ENCODE measurements at regions of chr6 and their contacts with region 1.

Region 1: GRCh38 chr6:2103644-2104523 is 141.5 kb downstream of the GMDS start:
- DNase-seq: peak; percentile 38
- H3K4me3 ChIP-seq: no peak overlapping the region
- H3K27ac ChIP-seq: no peak overlapping the region
- H3K4me1 ChIP-seq: no peaks in the 10 kb centered on the region
- CTCF ChIP-seq: peak; percentile 81

Region 2: GRCh38 chr6:1604158-1605030 is 499.5 kb before region 1 on chr6:
- CTCF ChIA-PET with region 1: no interaction called
- POLR2A ChIA-PET with region 1: no interaction called
- intact Hi-C with region 1: loop called (anchors 2 kb)
- DNase-seq: peak; percentile 57
- H3K4me3 ChIP-seq: no peak overlapping the region
- H3K27ac ChIP-seq: no peak overlapping the region
- H3K4me1 ChIP-seq: no peaks in the 10 kb centered on the region
- CTCF ChIP-seq: peak; percentile 81

Region 3: DNA sequence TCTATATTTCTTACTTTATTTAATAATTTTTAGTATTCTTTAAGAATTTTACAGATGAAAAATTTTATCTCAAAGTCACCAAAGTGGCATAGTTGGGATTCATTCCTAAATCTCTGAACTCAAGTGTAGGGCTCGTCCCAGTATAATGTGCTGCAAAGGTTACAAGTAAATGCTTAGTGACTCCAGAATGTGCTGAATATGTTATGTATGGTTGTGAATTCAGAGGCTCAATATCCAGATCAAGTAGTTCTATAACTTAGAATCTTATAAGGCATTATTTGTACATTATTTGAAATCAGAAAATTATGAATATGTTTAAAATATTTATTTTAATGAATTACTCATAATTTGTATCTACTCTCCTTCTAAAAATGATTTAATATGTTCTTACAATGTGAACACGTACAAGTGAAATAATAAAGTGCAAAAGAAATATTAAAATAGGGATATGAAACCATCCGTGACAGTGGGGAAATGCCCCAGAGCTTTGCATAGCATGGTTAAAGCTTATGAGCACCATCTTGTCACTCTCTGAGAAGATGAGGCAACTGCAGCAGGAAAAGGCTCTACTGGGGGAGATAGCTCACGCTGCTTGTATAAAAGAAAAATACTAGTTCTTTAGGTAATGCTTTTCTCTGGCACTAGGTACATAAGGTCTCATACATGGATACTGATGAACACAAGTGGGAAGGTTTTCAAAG is 235.2 kb before region 1 on chr6:
- CTCF ChIA-PET with region 1: no interaction called
- POLR2A ChIA-PET with region 1: no interaction called
- intact Hi-C with region 1: no loop called
- DNase-seq: peak; percentile 51
- H3K4me3 ChIP-seq: no peak overlapping the region
- H3K27ac ChIP-seq: no peak overlapping the region
- H3K4me1 ChIP-seq: peaks cover 28% of the 10 kb centered on the region
- CTCF ChIP-seq: no peak

Region 4: DNA sequence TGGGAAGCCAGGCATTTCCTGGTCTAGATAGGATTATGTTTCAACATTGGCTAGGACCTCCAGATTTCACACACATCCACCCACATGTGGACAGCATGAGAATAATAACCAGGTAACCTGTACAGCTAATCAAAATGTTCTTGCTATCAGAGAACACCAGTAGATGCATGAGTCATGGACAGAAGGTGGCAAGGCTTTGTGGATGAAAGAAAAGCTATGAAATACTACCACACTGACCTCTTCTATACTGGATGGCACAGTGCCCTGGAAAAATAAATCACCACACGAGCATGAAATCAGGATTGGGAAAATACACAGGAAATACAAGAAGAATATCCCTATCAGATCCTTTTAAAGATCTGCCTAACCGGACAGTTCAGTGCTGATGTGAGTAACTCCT is 28.5 kb after region 1 on chr6:
- CTCF ChIA-PET with region 1: no interaction called
- POLR2A ChIA-PET with region 1: no interaction called
- intact Hi-C with region 1: no loop called
- DNase-seq: no peak
- H3K4me3 ChIP-seq: no peak overlapping the region
- H3K27ac ChIP-seq: no peak overlapping the region
- H3K4me1 ChIP-seq: no peaks in the 10 kb centered on the region
- CTCF ChIP-seq: no peak

Region 5: DNA sequence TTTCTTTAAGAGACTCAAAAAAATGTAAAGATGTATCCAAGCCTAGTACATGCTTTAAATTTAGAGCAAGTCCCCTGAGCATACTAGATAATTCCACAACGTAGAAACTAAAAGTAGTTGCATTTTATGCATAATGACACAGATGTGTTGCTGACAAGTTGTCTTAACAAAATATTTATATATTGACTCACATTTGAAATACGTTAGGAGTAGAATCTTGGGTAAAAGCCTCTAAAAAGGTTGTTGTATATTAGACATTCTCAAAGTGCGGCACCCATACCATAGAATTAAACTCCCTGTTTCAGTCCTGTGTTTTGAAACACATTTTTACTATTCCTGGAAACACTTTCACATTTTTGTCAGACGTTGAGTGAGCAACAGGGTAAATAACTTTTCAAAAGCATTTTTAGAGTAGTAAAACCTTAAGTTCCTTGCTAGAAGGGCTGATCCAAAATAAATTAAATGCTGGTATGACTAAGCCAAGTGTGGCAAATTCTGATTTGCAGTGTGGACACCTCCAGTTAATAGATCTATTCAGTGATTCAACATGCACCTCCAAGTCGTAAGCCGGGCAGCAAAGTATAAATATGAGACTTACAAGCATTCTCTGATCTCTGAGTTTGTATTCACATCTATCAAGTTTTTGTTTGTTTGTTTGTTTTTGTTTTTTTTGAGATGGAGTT is 44.0 kb after region 1 on chr6:
- CTCF ChIA-PET with region 1: no interaction called
- POLR2A ChIA-PET with region 1: no interaction called
- intact Hi-C with region 1: no loop called
- DNase-seq: no peak
- H3K4me3 ChIP-seq: no peak overlapping the region
- H3K27ac ChIP-seq: no peak overlapping the region
- H3K4me1 ChIP-seq: no peaks in the 10 kb centered on the region
- CTCF ChIP-seq: no peak